ENCODE measurements at regions of chr1 and their contacts with region 1.

Region 1: GRCh38 chr1:204506961-204507387 is 9.2 kb upstream of the MDM4 start:
- DNase-seq: peak; percentile 79 to 97
- ATAC-seq: peak; percentile 73 to 88 (median 78)
- H3K4me3 ChIP-seq: peak overlapping the region; percentile 90
- H3K4me3 Mint-ChIP-seq: peak overlapping the region; percentile 98
- H3K27ac ChIP-seq: peak overlapping the region; percentile 100
- H3K27ac Mint-ChIP-seq: peak overlapping the region; percentile 97 to 100
- H3K4me1 ChIP-seq: peaks cover 14% of the 10 kb centered on the region
- H3K4me1 Mint-ChIP-seq: peaks cover 33 to 34% of the 10 kb centered on the region in 2 donors
- H3K27me3 ChIP-seq: no peaks in the 10 kb centered on the region
- H3K27me3 Mint-ChIP-seq: peaks cover 3 to 12% of the 10 kb centered on the region in 2 donors
- CTCF ChIP-seq: no peak

Region 2: GRCh38 chr1:204162231-204163074 is 344.5 kb before region 1 on chr1:
- intact Hi-C with region 1: loop called (anchors 2 kb)
- DNase-seq: peak; percentile 77 to 86
- ATAC-seq: peak; percentile 81 to 99 (median 97)
- H3K4me3 ChIP-seq: no peak overlapping the region
- H3K4me3 Mint-ChIP-seq: no peak overlapping the region
- H3K27ac ChIP-seq: no peak overlapping the region
- H3K27ac Mint-ChIP-seq: no peak overlapping the region
- H3K4me1 ChIP-seq: no peaks in the 10 kb centered on the region
- H3K4me1 Mint-ChIP-seq: no peaks in the 10 kb centered on the region
- H3K27me3 ChIP-seq: no peaks in the 10 kb centered on the region
- H3K27me3 Mint-ChIP-seq: peaks cover 0 to 4% of the 10 kb centered on the region in 2 donors
- CTCF ChIP-seq: peak; percentile 98

Region 3: DNA sequence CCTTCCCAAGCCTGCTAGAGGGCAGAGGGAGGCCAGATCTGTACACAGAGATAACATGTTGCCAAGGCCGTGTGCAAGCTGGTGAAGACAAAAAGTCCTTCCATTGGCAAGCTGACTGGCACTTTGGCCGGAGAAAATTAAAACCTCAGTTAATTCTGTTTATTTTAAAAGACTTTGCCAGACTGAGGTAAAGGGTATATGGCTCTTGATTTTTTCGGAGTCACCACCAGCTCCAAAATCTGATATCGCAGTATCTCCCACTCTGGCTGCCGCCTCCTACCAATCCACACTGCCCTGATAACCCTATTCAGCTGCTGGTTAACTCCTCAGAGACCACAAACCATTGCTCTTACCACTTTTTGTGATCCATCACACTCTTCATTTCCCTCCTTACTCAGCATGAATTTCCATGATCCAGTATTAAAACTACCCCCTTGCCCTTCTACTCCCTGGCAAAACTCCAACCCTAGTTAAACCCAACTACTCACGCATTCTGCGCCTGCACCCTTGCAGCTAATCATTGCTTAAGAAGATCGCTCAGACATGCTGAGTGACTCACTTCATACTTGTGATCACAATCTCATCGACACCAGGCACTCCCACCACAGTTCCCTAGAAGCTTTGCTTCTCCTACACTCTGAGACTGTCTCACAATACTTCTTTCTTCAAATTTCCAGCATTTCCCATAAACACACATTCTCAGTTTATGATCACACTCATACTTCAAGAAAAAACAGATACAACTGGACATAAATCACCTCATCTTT is 89.6 kb before region 1 on chr1:
- intact Hi-C with region 1: loop called (anchors 1 kb)
- DNase-seq: peak; percentile 32 to 51
- ATAC-seq: peak; percentile 83 to 87 (median 86)
- H3K4me3 ChIP-seq: no peak overlapping the region
- H3K4me3 Mint-ChIP-seq: peak overlapping the region; percentile 74
- H3K27ac ChIP-seq: peak overlapping the region; percentile 46
- H3K27ac Mint-ChIP-seq: peak overlapping the region; percentile 88 to 93
- H3K4me1 ChIP-seq: peaks cover 23% of the 10 kb centered on the region
- H3K4me1 Mint-ChIP-seq: peaks cover 33 to 49% of the 10 kb centered on the region in 2 donors
- H3K27me3 ChIP-seq: no peaks in the 10 kb centered on the region
- H3K27me3 Mint-ChIP-seq: no peaks in the 10 kb centered on the region
- CTCF ChIP-seq: no peak

Region 4: DNA sequence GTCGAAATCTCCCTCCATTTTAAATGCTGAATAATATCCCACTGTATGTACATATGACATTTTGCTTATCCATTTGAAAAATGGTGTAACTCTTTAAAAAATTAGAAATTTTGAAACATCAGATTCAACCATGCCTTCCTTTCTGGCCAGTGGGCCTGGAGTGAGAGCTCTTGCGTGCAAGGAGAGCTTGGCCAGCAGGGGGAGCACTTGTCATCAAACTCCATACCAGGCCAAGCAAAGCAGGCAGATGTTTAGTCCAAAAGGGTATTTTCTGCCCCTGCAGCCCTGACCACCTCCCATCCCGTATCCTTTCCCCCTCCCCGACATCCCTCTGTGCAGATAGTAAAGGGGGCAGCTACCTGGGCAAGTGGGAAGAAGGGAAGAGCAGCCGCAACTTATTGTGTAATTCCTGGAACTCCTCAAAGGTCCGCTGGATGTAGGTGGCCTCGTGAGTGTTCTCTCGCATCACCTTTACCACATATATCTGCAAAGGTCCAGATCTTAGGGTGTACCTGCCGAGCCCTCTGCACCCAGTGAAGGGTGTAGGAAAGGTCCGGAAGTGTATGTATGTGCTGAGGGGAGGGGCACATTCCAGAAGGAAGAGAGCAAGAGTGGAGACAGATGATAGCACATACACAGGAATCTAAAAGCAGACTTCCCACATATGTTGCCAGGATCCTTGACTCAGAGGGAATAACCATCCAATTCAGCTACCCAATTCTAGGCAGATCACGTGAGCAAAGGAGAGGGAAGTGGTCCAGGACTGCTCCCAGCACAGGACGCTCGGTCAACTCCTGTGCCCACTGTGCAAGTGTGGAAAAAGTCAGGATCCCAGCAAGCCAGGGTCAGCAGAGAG is 75.4 kb before region 1 on chr1:
- intact Hi-C with region 1: loop called (anchors 1 kb)
- DNase-seq: peak; percentile 76 to 91
- ATAC-seq: peak; percentile 82 to 98 (median 90)
- H3K4me3 ChIP-seq: no peak overlapping the region
- H3K4me3 Mint-ChIP-seq: no peak overlapping the region
- H3K27ac ChIP-seq: no peak overlapping the region
- H3K27ac Mint-ChIP-seq: no peak overlapping the region
- H3K4me1 ChIP-seq: no peaks in the 10 kb centered on the region
- H3K4me1 Mint-ChIP-seq: peaks cover 6 to 7% of the 10 kb centered on the region in 2 donors
- H3K27me3 ChIP-seq: no peaks in the 10 kb centered on the region
- H3K27me3 Mint-ChIP-seq: no peaks in the 10 kb centered on the region
- CTCF ChIP-seq: peak; percentile 90

Region 5: GRCh38 chr1:204446370-204447111 is 60.4 kb before region 1 on chr1:
- intact Hi-C with region 1: loop called (anchors 1 kb)
- DNase-seq: peak; percentile 65 to 89
- ATAC-seq: peak; percentile 89 to 99 (median 97)
- H3K4me3 ChIP-seq: no peak overlapping the region
- H3K4me3 Mint-ChIP-seq: no peak overlapping the region
- H3K27ac ChIP-seq: no peak overlapping the region
- H3K27ac Mint-ChIP-seq: peak overlapping the region; percentile 76 to 86
- H3K4me1 ChIP-seq: peaks cover 13% of the 10 kb centered on the region
- H3K4me1 Mint-ChIP-seq: peaks cover 4% of the 10 kb centered on the region in 2 donors
- H3K27me3 ChIP-seq: no peaks in the 10 kb centered on the region
- H3K27me3 Mint-ChIP-seq: no peaks in the 10 kb centered on the region
- CTCF ChIP-seq: peak; percentile 74

Region 6: DNA sequence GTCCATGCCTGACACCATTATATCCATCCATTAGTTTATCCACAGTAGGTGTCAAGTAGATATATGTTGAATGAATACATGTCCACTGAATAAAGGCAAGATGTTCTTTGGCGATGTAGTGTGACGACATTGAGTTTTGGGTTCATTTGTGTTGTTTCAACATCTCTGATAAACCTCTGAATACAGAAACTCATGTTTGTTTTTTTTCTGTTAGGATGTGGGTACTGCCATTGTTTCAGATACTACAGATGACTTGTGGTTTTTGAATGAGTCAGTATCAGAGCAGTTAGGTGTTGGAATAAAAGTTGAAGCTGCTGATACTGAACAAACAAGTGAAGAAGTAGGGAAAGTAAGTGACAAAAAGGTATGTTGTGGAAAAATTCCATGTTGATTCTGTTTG is 37.3 kb after region 1 on chr1:
- intact Hi-C with region 1: loop called (anchors 5 kb)
- DNase-seq: peak in 1 of 2 donors; percentile 69
- ATAC-seq: peak; percentile 85 to 95 (median 92)
- H3K4me3 ChIP-seq: no peak overlapping the region
- H3K4me3 Mint-ChIP-seq: peak overlapping the region; percentile 45
- H3K27ac ChIP-seq: peak overlapping the region; percentile 84
- H3K27ac Mint-ChIP-seq: peak overlapping the region; percentile 91
- H3K4me1 ChIP-seq: peaks cover 16% of the 10 kb centered on the region
- H3K4me1 Mint-ChIP-seq: peaks cover 37 to 58% of the 10 kb centered on the region in 2 donors
- H3K27me3 ChIP-seq: no peaks in the 10 kb centered on the region
- H3K27me3 Mint-ChIP-seq: no peaks in the 10 kb centered on the region
- CTCF ChIP-seq: no peak